Activated CD8-positive, alpha-beta T cell treated with anti-CD3 and anti-CD28 coated beads, Interleukin-2, amount 10 ng/mL, durations not matched to agents 7 days and 5 days (primary cell): ENCODE measurements at regions of chr5 and their contacts with region 1.

Region 1: DNA sequence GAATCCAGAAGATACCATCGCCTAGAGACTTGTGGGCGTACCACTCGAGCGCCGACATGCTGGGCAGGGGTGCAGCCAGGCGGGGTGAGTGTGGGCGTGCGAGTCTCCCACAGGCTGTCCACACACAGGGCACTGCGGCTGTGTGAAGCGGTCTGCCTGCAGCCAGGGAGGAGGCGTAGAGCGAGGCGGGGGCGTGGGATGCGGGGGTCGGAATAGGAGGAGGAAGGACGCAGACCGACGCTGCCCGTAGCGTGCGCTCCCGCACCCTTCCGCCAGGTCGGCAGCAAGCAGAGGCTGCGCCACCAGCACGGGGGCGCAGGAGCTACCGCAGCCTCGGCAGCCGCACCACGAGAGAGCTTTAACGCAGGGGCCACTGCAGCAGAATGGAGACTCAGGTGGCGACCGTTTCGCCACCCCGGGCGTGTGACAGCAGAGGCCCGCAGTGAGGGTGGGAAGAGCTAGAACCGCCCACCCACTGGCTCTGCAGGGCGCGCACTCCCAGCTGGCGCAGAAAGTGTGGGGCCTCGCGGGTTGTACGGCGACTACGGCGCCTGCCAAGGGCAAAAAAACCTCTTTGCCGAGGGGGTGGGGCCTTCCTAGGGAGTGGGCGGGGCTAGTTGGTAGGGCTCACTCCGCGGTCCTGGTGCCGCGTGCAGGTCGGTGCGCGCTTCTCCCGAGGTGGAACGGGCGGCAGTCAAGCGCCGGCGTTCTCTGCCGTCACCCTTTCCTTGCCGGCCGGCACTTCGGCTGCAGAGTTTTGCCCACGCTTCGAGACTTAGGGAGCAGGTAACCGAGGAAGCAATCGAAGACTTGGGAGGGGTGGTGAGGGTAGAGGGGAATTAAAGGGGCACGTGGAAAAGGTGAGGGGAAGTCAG is at the starts of genes MBLAC2 and POLR3G:
- DNase-seq: peak; percentile 96
- ATAC-seq: peak; percentile 89
- H3K4me3 Mint-ChIP-seq: peak within 1 kb of the TSS; percentile 89
- H3K27ac Mint-ChIP-seq: peak within 1 kb of the TSS; percentile 92
- H3K4me1 Mint-ChIP-seq: peaks cover 29% of the 10 kb centered on the region
- H3K27me3 Mint-ChIP-seq: no peaks in the 10 kb centered on the region
- total RNA-seq, gene MBLAC2: 5.1 to 5.5 TPM
- total RNA-seq, gene POLR3G: 5.5 to 5.8 TPM

Region 2: GRCh38 chr5:90386099-90386710 is 88.3 kb before region 1 on chr5:
- CTCF ChIA-PET with region 1: no interaction called
- POLR2A ChIA-PET with region 1: no interaction called
- DNase-seq: no peak
- ATAC-seq: no peak
- H3K4me3 Mint-ChIP-seq: no peak overlapping the region
- H3K27ac Mint-ChIP-seq: no peak overlapping the region
- H3K4me1 Mint-ChIP-seq: no peaks in the 10 kb centered on the region
- H3K27me3 Mint-ChIP-seq: no peaks in the 10 kb centered on the region

Region 3: GRCh38 chr5:90398726-90399125 is 75.7 kb before region 1 on chr5:
- CTCF ChIA-PET with region 1: no interaction called
- POLR2A ChIA-PET with region 1: no interaction called
- DNase-seq: no peak
- ATAC-seq: no peak
- H3K4me3 Mint-ChIP-seq: no peak overlapping the region
- H3K27ac Mint-ChIP-seq: no peak overlapping the region
- H3K4me1 Mint-ChIP-seq: no peaks in the 10 kb centered on the region
- H3K27me3 Mint-ChIP-seq: no peaks in the 10 kb centered on the region

Region 4: DNA sequence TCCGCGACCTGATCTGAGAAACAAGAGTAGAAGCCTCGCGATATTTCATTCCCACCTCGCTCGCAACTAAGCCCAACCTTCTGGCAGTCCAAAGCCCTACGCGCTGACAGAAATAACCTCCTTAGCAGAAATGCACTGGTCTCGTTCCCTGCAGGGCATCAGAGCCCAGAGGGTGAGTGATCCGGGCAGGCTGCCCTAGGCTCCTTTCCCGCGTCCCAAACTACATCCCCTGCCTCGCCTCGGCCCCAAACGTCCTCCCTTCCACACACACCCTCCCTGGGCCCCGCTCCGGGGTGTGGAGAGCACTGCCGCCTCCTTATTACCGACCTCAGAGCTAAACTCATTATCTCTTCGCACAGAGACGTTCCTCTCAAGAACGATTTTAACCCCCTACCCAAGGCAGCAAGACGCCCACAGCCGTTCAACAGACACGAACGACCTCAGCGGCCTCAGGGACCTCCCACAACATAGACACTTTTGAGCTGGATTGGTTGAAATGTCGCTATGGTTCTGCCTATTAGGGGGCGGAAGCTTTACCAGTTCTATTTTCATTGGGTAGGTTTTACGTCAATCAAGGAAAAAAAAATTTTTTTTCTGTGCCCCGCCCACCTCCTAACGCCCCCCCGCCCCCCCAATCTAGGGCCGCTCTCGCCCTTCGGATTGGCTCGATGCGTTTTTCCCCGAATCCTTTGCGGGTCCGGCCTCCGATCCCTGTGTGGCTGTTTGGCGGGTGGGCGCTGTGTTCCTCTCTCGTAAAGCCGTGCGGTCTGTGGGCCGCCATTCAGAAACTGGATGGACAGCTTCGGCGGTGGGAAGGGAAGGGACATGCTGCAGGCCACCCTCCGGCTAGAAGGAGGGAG is 64.9 kb before region 1 on chr5 and contains the start of gene CETN3:
- CTCF ChIA-PET with region 1: interaction called, 8 read pairs
- POLR2A ChIA-PET with region 1: interaction called, 17 read pairs
- DNase-seq: peak; percentile 94
- ATAC-seq: peak; percentile 95
- H3K4me3 Mint-ChIP-seq: no peak within 1 kb of the TSS
- H3K27ac Mint-ChIP-seq: no peak within 1 kb of the TSS
- H3K4me1 Mint-ChIP-seq: peaks cover 11% of the 10 kb centered on the region
- H3K27me3 Mint-ChIP-seq: no peaks in the 10 kb centered on the region
- total RNA-seq, gene CETN3: 30.6 to 31.3 TPM

Region 5: GRCh38 chr5:90461292-90461691 is 13.2 kb before region 1 on chr5:
- CTCF ChIA-PET with region 1: interaction called, 10 read pairs
- POLR2A ChIA-PET with region 1: interaction called, 3 read pairs
- DNase-seq: no peak
- ATAC-seq: no peak
- H3K4me3 Mint-ChIP-seq: no peak overlapping the region
- H3K27ac Mint-ChIP-seq: no peak overlapping the region
- H3K4me1 Mint-ChIP-seq: no peaks in the 10 kb centered on the region
- H3K27me3 Mint-ChIP-seq: no peaks in the 10 kb centered on the region